T-cell (primary cell): ENCODE measurements at regions of chr5 and their contacts with region 1.

Region 1: DNA sequence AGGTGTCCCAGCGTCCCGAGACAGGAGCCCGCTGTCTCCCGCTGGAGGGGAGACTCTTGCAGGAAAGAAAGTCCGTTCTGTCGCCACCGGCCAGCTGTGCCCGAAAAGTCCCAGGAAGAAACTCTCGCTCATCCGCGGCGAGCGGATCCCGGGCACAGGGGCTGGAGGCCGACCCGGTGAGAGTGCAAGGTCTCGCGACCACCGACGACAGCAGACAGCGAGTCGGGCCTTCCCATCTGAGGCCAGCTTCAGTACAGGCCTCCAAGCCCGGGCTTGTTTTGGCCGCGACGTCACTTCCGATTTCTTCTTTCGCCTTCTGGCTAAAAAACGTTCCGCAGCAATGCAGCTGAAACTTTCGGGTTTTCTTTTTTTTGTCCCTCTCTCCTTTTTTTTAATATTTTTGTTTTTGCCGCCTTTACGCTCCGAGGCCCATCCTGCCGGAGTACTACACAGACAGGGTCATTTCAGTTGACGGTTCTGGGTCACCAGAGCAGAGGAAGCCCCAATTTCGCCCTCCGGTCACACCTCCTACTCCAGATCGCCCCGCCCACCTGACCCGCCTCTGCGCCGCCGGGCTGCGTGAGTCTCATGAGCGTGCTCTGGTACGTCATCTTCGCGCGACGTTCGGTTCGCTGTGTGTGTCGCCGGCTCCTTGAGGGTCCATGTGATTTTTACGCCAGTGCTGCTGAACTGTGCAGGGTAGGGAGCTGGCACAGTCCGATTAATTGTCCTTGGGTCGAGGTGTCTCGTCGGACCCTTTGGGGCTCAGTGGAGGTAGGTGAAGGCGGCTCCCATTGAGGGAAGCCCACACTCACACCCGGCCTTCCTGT is at the starts of genes ANKRA2 and UTP15:
- DNase-seq: peak; percentile 94 to 100 (median 98)
- ATAC-seq: peak; percentile 94 to 98 (median 97)
- H3K4me3 ChIP-seq: peak within 1 kb of the TSS; percentile 93 to 99
- H3K4me3 Mint-ChIP-seq: peak within 1 kb of the TSS; percentile 92 to 100 (median 95)
- H3K27ac ChIP-seq: peak within 1 kb of the TSS; percentile 96
- H3K27ac Mint-ChIP-seq: peak within 1 kb of the TSS; percentile 98 to 100
- H3K4me1 ChIP-seq: peaks cover 18 to 20% of the 10 kb centered on the region in 2 experiments
- H3K4me1 Mint-ChIP-seq: peaks cover 36 to 57% (median 55%) of the 10 kb centered on the region in 3 donors
- H3K27me3 ChIP-seq: no peaks in the 10 kb centered on the region
- H3K27me3 Mint-ChIP-seq: no peaks in the 10 kb centered on the region
- total RNA-seq, gene ANKRA2: 37.8 to 42.8 (median 39.7) TPM
- total RNA-seq, gene UTP15: 21.6 to 40.6 (median 24.5) TPM

Region 2: GRCh38 chr5:73498057-73499008 is 67.0 kb before region 1 on chr5 and contains the start of gene BTF3:
- CTCF ChIA-PET with region 1: interaction called in 1 of 2 experiments, 5 read pairs
- POLR2A ChIA-PET with region 1: interaction called, 4 to 11 read pairs
- DNase-seq: peak; percentile 84 to 96 (median 91)
- ATAC-seq: peak; percentile 94 to 96 (median 95)
- H3K4me3 ChIP-seq: peak within 1 kb of the TSS; percentile 91 to 93
- H3K4me3 Mint-ChIP-seq: peak within 1 kb of the TSS; percentile 97 to 98 (median 98)
- H3K27ac ChIP-seq: peak within 1 kb of the TSS; percentile 96
- H3K27ac Mint-ChIP-seq: peak within 1 kb of the TSS; percentile 98 to 99
- H3K4me1 ChIP-seq: peaks cover 14 to 21% of the 10 kb centered on the region in 2 experiments
- H3K4me1 Mint-ChIP-seq: peaks cover 40 to 47% (median 46%) of the 10 kb centered on the region in 3 donors
- H3K27me3 ChIP-seq: peaks cover 0 to 2% of the 10 kb centered on the region in 2 experiments
- H3K27me3 Mint-ChIP-seq: peaks cover 5 to 9% of the 10 kb centered on the region in 2 donors
- total RNA-seq, gene BTF3: 585 to 688 (median 639) TPM

Region 3: GRCh38 chr5:73596705-73597328 is 31.5 kb after region 1 on chr5:
- CTCF ChIA-PET with region 1: no interaction called
- POLR2A ChIA-PET with region 1: no interaction called
- DNase-seq: peak in 3 of 35 experiments; percentile 2 to 30 (median 7)
- ATAC-seq: no peak
- H3K4me3 ChIP-seq: no peak overlapping the region
- H3K4me3 Mint-ChIP-seq: no peak overlapping the region
- H3K27ac ChIP-seq: no peak overlapping the region
- H3K27ac Mint-ChIP-seq: no peak overlapping the region
- H3K4me1 ChIP-seq: no peaks in the 10 kb centered on the region
- H3K4me1 Mint-ChIP-seq: no peaks in the 10 kb centered on the region
- H3K27me3 ChIP-seq: no peaks in the 10 kb centered on the region
- H3K27me3 Mint-ChIP-seq: peaks cover 0 to 4% of the 10 kb centered on the region in 2 donors